Activated naive CD4-positive, alpha-beta T cell treated with anti-CD3 and anti-CD28 coated beads for 36 hours (primary cell): ENCODE measurements at regions of chr12 and their contacts with region 1.

Region 1: DNA sequence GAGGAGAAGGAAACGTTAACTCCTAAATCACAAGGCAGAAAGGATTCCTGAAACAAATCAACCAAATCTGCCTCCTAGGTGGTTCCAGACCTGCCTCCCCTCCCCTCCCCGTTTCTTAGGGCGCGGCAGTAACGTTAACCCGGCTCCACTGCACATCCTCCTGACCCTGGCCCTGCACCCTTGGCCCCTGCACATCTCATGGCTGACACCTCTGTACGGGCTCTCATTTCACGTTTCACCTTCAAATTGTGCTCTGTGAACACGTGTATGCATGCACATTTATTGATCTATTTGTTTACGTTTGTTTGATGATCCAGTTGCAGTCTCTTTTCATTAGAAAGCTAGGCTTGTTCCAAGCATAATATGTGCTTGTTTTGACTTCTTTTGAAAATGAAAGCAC is 358.1 kb downstream of the ADGRD1 start:
- DNase-seq: no peak
- H3K4me3 Mint-ChIP-seq: no peak overlapping the region
- H3K27ac Mint-ChIP-seq: peak overlapping the region; percentile 5
- H3K4me1 Mint-ChIP-seq: peaks cover 8% of the 10 kb centered on the region
- H3K27me3 Mint-ChIP-seq: peaks cover 16% of the 10 kb centered on the region

Region 2: GRCh38 chr12:131642101-131642540 is 330.4 kb after region 1 on chr12:
- CTCF ChIA-PET with region 1: no interaction called
- intact Hi-C with region 1: loop called (anchors 5 kb)
- DNase-seq: peak; percentile 20
- H3K4me3 Mint-ChIP-seq: no peak overlapping the region
- H3K27ac Mint-ChIP-seq: no peak overlapping the region
- H3K4me1 Mint-ChIP-seq: no peaks in the 10 kb centered on the region
- H3K27me3 Mint-ChIP-seq: no peaks in the 10 kb centered on the region